PC-3 (cell line): ENCODE measurements at regions of chr10 and their contacts with region 1.

Region 1: DNA sequence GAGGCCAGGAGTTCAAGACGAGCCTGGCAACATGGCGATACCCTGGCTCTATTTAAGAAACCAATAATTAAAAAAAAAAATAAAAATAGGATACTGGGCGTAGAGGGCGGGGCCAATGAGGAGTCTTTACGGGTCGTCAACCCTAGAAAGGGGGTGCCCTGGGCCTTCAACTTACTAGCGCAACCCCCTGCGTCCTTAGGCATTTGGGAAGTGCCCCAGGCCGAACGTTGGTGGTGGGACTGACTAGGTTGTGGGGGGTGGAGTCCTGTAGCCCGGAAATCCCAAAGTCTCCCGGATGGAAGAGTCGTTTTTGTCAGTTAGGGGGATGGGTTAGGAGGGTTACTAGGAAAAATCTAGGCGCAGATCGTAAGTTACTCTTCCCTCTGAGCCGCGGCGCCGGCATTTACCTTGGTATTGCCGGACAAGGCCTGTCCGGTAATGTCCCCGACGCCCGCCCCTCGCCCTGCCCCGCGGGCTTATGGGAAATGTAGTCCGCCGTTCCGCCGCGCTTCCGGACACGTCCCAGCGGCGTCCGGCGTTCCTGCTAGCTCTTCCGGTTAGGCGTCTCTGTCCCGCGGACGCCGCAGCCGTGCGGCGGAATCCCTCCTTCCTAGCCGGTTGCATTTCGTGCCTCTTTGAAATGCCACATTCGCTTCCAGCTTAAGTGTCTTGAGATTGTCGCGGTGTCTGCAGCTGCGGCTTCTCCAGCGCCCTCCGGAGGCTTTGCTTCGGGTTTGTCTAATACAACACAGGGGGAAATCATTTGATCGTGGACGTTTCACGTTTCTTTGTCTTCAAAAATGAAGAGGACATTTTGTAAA is 1.3 kb upstream of the ACBD5 start:
- DNase-seq: peak; percentile 91
- ATAC-seq: peak; percentile 64
- H3K4me3 ChIP-seq: peak overlapping the region; percentile 70
- H3K27ac ChIP-seq: peak overlapping the region; percentile 80
- H3K4me1 ChIP-seq: peaks cover 30% of the 10 kb centered on the region
- H3K27me3 ChIP-seq: no peaks in the 10 kb centered on the region
- CTCF ChIP-seq: peak; percentile 33; the same call in 1 of the 2 replicates

Region 2: GRCh38 chr10:27143686-27144085 is 98.2 kb before region 1 on chr10:
- CTCF ChIA-PET with region 1: no interaction called
- POLR2A ChIA-PET with region 1: interaction called, 17 read pairs
- intact Hi-C with region 1: no loop called
- DNase-seq: peak; percentile 9
- ATAC-seq: peak; percentile 35; the same call in 1 of the 2 replicates
- H3K4me3 ChIP-seq: no peak overlapping the region
- H3K27ac ChIP-seq: no peak overlapping the region
- H3K4me1 ChIP-seq: no peaks in the 10 kb centered on the region
- H3K27me3 ChIP-seq: no peaks in the 10 kb centered on the region
- CTCF ChIP-seq: no peak

Region 3: GRCh38 chr10:27155066-27155754 is 86.7 kb before region 1 on chr10 and contains the start of gene MASTL:
- CTCF ChIA-PET with region 1: no interaction called
- POLR2A ChIA-PET with region 1: no interaction called
- intact Hi-C with region 1: loop called (anchors 2 kb)
- DNase-seq: peak; percentile 84
- ATAC-seq: peak; percentile 69
- H3K4me3 ChIP-seq: peak within 1 kb of the TSS; percentile 94
- H3K27ac ChIP-seq: peak within 1 kb of the TSS; percentile 94
- H3K4me1 ChIP-seq: peaks cover 26% of the 10 kb centered on the region
- H3K27me3 ChIP-seq: no peaks in the 10 kb centered on the region
- CTCF ChIP-seq: no peak
- total RNA-seq, gene MASTL: 18.6 and 21.2 TPM in 2 replicates